Caco-2 (cell line): ENCODE measurements at regions of chr1 and their contacts with region 1.

Region 1: GRCh38 chr1:75991497-75992114 is 59.4 kb upstream of the ASB17 start:
- DNase-seq: peak; percentile 75 to 77
- H3K4me3 ChIP-seq: no peak overlapping the region
- H3K4me3 Mint-ChIP-seq: no peak overlapping the region
- H3K27ac Mint-ChIP-seq: no peak overlapping the region
- H3K4me1 ChIP-seq: no peaks in the 10 kb centered on the region
- H3K4me1 Mint-ChIP-seq: no peaks in the 10 kb centered on the region
- H3K27me3 ChIP-seq: no peaks in the 10 kb centered on the region
- H3K27me3 Mint-ChIP-seq: no peaks in the 10 kb centered on the region
- CTCF ChIP-seq: peak; percentile 49 to 63

Region 2: DNA sequence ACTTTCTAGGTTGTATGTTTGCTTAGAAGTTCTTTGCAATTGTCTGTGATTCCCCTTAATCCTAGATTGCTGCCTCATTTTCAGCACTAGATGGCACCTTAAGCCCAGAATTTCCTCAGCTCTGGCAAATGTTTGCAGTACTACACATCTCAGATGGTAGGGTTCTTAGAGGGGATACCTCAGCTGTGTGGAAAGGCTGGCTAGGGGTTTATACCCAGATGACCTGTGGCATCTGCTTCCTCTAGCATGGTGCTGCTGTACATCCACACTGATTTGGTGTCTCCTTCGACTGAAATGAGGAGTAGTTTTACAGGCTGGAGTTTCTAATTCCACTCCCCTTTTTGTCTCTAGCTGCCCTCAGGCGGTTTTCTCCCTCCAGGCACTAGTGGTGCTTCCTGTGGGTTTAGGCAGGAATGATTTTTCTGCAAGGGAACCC is 82.9 kb before region 1 on chr1:
- CTCF ChIA-PET with region 1: no interaction called
- POLR2A ChIA-PET with region 1: no interaction called
- intact Hi-C with region 1: loop called (anchors 2 kb)
- DNase-seq: peak; percentile 42 to 53
- H3K4me3 ChIP-seq: no peak overlapping the region
- H3K4me3 Mint-ChIP-seq: no peak overlapping the region
- H3K27ac Mint-ChIP-seq: no peak overlapping the region
- H3K4me1 ChIP-seq: no peaks in the 10 kb centered on the region
- H3K4me1 Mint-ChIP-seq: peaks cover 16% of the 10 kb centered on the region
- H3K27me3 ChIP-seq: no peaks in the 10 kb centered on the region
- H3K27me3 Mint-ChIP-seq: no peaks in the 10 kb centered on the region
- CTCF ChIP-seq: peak; percentile 37 to 46

Region 3: GRCh38 chr1:75954586-75954985 is 37.0 kb before region 1 on chr1:
- CTCF ChIA-PET with region 1: no interaction called
- POLR2A ChIA-PET with region 1: no interaction called
- intact Hi-C with region 1: no loop called
- DNase-seq: no peak
- H3K4me3 ChIP-seq: no peak overlapping the region
- H3K4me3 Mint-ChIP-seq: no peak overlapping the region
- H3K27ac Mint-ChIP-seq: peak overlapping the region; percentile 92
- H3K4me1 ChIP-seq: peaks cover 44% of the 10 kb centered on the region
- H3K4me1 Mint-ChIP-seq: peaks cover 16% of the 10 kb centered on the region
- H3K27me3 ChIP-seq: no peaks in the 10 kb centered on the region
- H3K27me3 Mint-ChIP-seq: no peaks in the 10 kb centered on the region
- CTCF ChIP-seq: no peak

Region 4: GRCh38 chr1:76074321-76075187 is 82.9 kb after region 1 on chr1 and contains the start of gene ST6GALNAC3:
- CTCF ChIA-PET with region 1: no interaction called
- POLR2A ChIA-PET with region 1: no interaction called
- intact Hi-C with region 1: loop called (anchors 2 kb)
- DNase-seq: peak; percentile 77 to 81
- H3K4me3 ChIP-seq: peak within 1 kb of the TSS; percentile 60
- H3K4me3 Mint-ChIP-seq: peak within 1 kb of the TSS; percentile 96
- H3K27ac Mint-ChIP-seq: peak within 1 kb of the TSS; percentile 80
- H3K4me1 ChIP-seq: peaks cover 10% of the 10 kb centered on the region; the same call in 1 of the 2 replicates
- H3K4me1 Mint-ChIP-seq: peaks cover 8% of the 10 kb centered on the region
- H3K27me3 ChIP-seq: no peaks in the 10 kb centered on the region
- H3K27me3 Mint-ChIP-seq: no peaks in the 10 kb centered on the region
- CTCF ChIP-seq: no peak
- total RNA-seq, gene ST6GALNAC3: 16.0 and 17.5 TPM in 2 replicates

Region 5: DNA sequence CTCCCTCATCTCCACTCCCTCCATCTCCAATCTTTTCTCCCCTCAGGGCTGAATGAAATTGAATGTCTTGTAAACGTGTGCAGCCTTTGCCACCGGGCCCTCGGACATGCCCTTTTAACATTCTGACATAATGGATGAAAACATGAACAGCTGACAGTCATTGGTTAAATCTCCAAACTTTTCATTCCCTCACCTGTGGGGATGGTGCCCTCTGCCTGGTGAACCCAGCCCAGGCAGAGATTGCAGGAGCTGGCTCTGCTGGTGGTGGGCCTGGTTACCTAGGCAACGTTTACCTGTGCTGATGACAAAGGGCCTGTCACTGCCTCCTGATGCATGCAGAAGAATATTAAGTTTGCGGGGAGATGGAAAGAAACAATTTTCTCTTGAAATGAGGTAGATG is 104.2 kb after region 1 on chr1:
- CTCF ChIA-PET with region 1: no interaction called
- POLR2A ChIA-PET with region 1: no interaction called
- intact Hi-C with region 1: loop called (anchors 5 kb)
- DNase-seq: peak in 1 of 2 experiments; percentile 11
- H3K4me3 ChIP-seq: no peak overlapping the region
- H3K4me3 Mint-ChIP-seq: no peak overlapping the region
- H3K27ac Mint-ChIP-seq: peak overlapping the region; percentile 16
- H3K4me1 ChIP-seq: no peaks in the 10 kb centered on the region
- H3K4me1 Mint-ChIP-seq: no peaks in the 10 kb centered on the region
- H3K27me3 ChIP-seq: no peaks in the 10 kb centered on the region
- H3K27me3 Mint-ChIP-seq: no peaks in the 10 kb centered on the region
- CTCF ChIP-seq: no peak

Region 6: DNA sequence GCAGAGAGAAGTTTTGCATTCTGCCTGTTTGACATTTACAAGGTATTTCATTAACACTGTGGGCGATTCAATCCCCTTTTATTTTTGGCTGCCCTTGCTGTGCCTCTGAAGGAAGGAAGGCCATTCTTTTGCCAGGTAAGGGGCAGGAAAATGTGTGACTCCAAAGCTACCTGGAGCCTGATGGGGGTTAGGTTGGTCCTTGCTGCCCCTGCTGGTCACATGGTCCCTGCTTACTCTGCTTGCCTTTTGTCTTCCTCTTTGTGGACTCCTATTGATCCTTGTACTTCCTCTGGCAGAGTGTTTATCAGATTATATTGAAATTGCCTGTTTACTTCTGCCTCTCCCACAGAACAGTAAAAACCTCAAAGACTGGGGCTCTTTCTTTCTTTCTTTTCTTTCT is 148.6 kb after region 1 on chr1:
- CTCF ChIA-PET with region 1: no interaction called
- POLR2A ChIA-PET with region 1: no interaction called
- intact Hi-C with region 1: loop called (anchors 5 kb)
- DNase-seq: peak in 1 of 2 experiments; percentile 3
- H3K4me3 ChIP-seq: no peak overlapping the region
- H3K4me3 Mint-ChIP-seq: no peak overlapping the region
- H3K27ac Mint-ChIP-seq: no peak overlapping the region
- H3K4me1 ChIP-seq: no peaks in the 10 kb centered on the region
- H3K4me1 Mint-ChIP-seq: peaks cover 9% of the 10 kb centered on the region
- H3K27me3 ChIP-seq: no peaks in the 10 kb centered on the region
- H3K27me3 Mint-ChIP-seq: no peaks in the 10 kb centered on the region
- CTCF ChIP-seq: peak in 1 of 2 experiments; percentile 16

Region 7: GRCh38 chr1:77143529-77144121 is 1152.0 kb after region 1 on chr1:
- CTCF ChIA-PET with region 1: no interaction called
- POLR2A ChIA-PET with region 1: no interaction called
- intact Hi-C with region 1: loop called (anchors 5 kb)
- DNase-seq: no peak
- H3K4me3 ChIP-seq: no peak overlapping the region
- H3K4me3 Mint-ChIP-seq: no peak overlapping the region
- H3K27ac Mint-ChIP-seq: no peak overlapping the region
- H3K4me1 ChIP-seq: no peaks in the 10 kb centered on the region
- H3K4me1 Mint-ChIP-seq: no peaks in the 10 kb centered on the region
- H3K27me3 ChIP-seq: no peaks in the 10 kb centered on the region
- H3K27me3 Mint-ChIP-seq: no peaks in the 10 kb centered on the region
- CTCF ChIP-seq: peak in 1 of 2 experiments; percentile 21